ENCODE measurements at regions of chr10 and their contacts with region 1.

Region 1: GRCh38 chr10:31603235-31604087 is 284.4 kb downstream of the ZEB1 start:
- DNase-seq: peak; percentile 92
- H3K4me3 ChIP-seq: peak overlapping the region; percentile 67 to 93 (median 79)
- H3K27ac ChIP-seq: peak overlapping the region; percentile 38
- H3K4me1 ChIP-seq: peaks cover 5% of the 10 kb centered on the region
- H3K27me3 ChIP-seq: peaks cover 8 to 13% of the 10 kb centered on the region in 2 experiments
- CTCF ChIP-seq: no peak
- POLR2A ChIP-seq: peak; percentile 41

Region 2: DNA sequence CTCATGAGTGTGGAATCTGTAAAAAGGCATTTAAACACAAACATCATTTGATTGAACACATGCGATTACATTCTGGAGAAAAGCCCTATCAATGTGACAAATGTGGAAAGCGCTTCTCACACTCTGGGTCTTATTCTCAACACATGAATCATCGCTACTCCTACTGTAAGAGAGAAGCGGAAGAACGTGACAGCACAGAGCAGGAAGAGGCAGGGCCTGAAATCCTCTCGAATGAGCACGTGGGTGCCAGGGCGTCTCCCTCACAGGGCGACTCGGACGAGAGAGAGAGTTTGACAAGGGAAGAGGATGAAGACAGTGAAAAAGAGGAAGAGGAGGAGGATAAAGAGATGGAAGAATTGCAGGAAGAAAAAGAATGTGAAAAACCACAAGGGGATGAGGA is 76.8 kb before region 1 on chr10:
- CTCF ChIA-PET with region 1: no interaction called
- POLR2A ChIA-PET with region 1: no interaction called
- dilution Hi-C with region 1: no loop called
- intact Hi-C with region 1: loop called (anchors 5 kb)
- DNase-seq: peak; percentile 26
- H3K4me3 ChIP-seq: no peak overlapping the region
- H3K27ac ChIP-seq: peak overlapping the region; percentile 13
- H3K4me1 ChIP-seq: peaks cover 24% of the 10 kb centered on the region
- H3K27me3 ChIP-seq: no peaks in the 10 kb centered on the region
- CTCF ChIP-seq: no peak
- POLR2A ChIP-seq: no peak

Region 3: GRCh38 chr10:31759799-31760626 is 156.6 kb after region 1 on chr10:
- CTCF ChIA-PET with region 1: no interaction called
- POLR2A ChIA-PET with region 1: no interaction called
- dilution Hi-C with region 1: no loop called
- intact Hi-C with region 1: loop called (anchors 1 kb)
- DNase-seq: peak; percentile 99
- H3K4me3 ChIP-seq: peak overlapping the region; percentile 57 to 77 (median 76)
- H3K27ac ChIP-seq: peak overlapping the region; percentile 94
- H3K4me1 ChIP-seq: peaks cover 11% of the 10 kb centered on the region
- H3K27me3 ChIP-seq: no peaks in the 10 kb centered on the region
- CTCF ChIP-seq: no peak
- POLR2A ChIP-seq: peak; percentile 83

Measured in endothelial cell of umbilical vein (primary cell).